ENCODE measurements at regions of chr1 and their contacts with region 1.

Region 1: GRCh38 chr1:23559136-23559984 is at the start of gene ID3:
- DNase-seq: peak; percentile 92 to 96 (median 95)
- H3K4me3 ChIP-seq: peak within 1 kb of the TSS; percentile 47 to 80 (median 61)
- H3K4me3 Mint-ChIP-seq: peak within 1 kb of the TSS; percentile 85 to 94
- H3K27ac ChIP-seq: peak within 1 kb of the TSS; percentile 80 to 82
- H3K27ac Mint-ChIP-seq: peak within 1 kb of the TSS; percentile 92 to 98 (median 97)
- H3K4me1 ChIP-seq: peaks cover 49 to 60% of the 10 kb centered on the region in 2 donors
- H3K4me1 Mint-ChIP-seq: peaks cover 66% of the 10 kb centered on the region
- H3K27me3 ChIP-seq: peaks cover 61 to 78% of the 10 kb centered on the region in 2 donors
- H3K27me3 Mint-ChIP-seq: peaks cover 77 to 89% (median 86%) of the 10 kb centered on the region in 3 donors
- CTCF ChIP-seq: no peak
- polyA plus RNA-seq, gene ID3: 1.1 to 31.1 (median 2.5) TPM

Region 2: GRCh38 chr1:23436520-23437354 is 122.6 kb before region 1 on chr1:
- intact Hi-C with region 1: no loop called
- DNase-seq: no peak
- H3K4me3 ChIP-seq: no peak overlapping the region
- H3K4me3 Mint-ChIP-seq: peak overlapping the region in 1 of 2 donors; percentile 26
- H3K27ac ChIP-seq: no peak overlapping the region
- H3K27ac Mint-ChIP-seq: no peak overlapping the region
- H3K4me1 ChIP-seq: no peaks in the 10 kb centered on the region
- H3K4me1 Mint-ChIP-seq: no peaks in the 10 kb centered on the region
- H3K27me3 ChIP-seq: peaks cover 0 to 2% of the 10 kb centered on the region in 2 donors
- H3K27me3 Mint-ChIP-seq: peaks cover 7 to 19% (median 17%) of the 10 kb centered on the region in 3 donors
- CTCF ChIP-seq: no peak

Region 3: GRCh38 chr1:23484253-23485001 is 74.9 kb before region 1 on chr1:
- intact Hi-C with region 1: no loop called
- DNase-seq: peak; percentile 71 to 88 (median 83)
- H3K4me3 ChIP-seq: peak overlapping the region; percentile 46 to 80 (median 46)
- H3K4me3 Mint-ChIP-seq: peak overlapping the region; percentile 89 to 95
- H3K27ac ChIP-seq: no peak overlapping the region
- H3K27ac Mint-ChIP-seq: peak overlapping the region in 6 of 7 donors; percentile 71 to 92 (median 88)
- H3K4me1 ChIP-seq: peaks cover 11 to 16% of the 10 kb centered on the region in 2 donors
- H3K4me1 Mint-ChIP-seq: peaks cover 14% of the 10 kb centered on the region
- H3K27me3 ChIP-seq: peaks cover 41 to 56% of the 10 kb centered on the region in 2 donors
- H3K27me3 Mint-ChIP-seq: peaks cover 62 to 72% (median 72%) of the 10 kb centered on the region in 3 donors
- CTCF ChIP-seq: no peak

Region 4: GRCh38 chr1:23591460-23592208 is 32.3 kb after region 1 on chr1:
- intact Hi-C with region 1: loop called in 1 of 2 experiments (anchors 5 kb)
- DNase-seq: no peak
- H3K4me3 ChIP-seq: no peak overlapping the region
- H3K4me3 Mint-ChIP-seq: no peak overlapping the region
- H3K27ac ChIP-seq: no peak overlapping the region
- H3K27ac Mint-ChIP-seq: peak overlapping the region in 2 of 7 donors; percentile 34 to 72
- H3K4me1 ChIP-seq: no peaks in the 10 kb centered on the region
- H3K4me1 Mint-ChIP-seq: peaks cover 16% of the 10 kb centered on the region
- H3K27me3 ChIP-seq: no peaks in the 10 kb centered on the region
- H3K27me3 Mint-ChIP-seq: peaks cover 8 to 24% (median 11%) of the 10 kb centered on the region in 3 donors
- CTCF ChIP-seq: no peak

Region 5: DNA sequence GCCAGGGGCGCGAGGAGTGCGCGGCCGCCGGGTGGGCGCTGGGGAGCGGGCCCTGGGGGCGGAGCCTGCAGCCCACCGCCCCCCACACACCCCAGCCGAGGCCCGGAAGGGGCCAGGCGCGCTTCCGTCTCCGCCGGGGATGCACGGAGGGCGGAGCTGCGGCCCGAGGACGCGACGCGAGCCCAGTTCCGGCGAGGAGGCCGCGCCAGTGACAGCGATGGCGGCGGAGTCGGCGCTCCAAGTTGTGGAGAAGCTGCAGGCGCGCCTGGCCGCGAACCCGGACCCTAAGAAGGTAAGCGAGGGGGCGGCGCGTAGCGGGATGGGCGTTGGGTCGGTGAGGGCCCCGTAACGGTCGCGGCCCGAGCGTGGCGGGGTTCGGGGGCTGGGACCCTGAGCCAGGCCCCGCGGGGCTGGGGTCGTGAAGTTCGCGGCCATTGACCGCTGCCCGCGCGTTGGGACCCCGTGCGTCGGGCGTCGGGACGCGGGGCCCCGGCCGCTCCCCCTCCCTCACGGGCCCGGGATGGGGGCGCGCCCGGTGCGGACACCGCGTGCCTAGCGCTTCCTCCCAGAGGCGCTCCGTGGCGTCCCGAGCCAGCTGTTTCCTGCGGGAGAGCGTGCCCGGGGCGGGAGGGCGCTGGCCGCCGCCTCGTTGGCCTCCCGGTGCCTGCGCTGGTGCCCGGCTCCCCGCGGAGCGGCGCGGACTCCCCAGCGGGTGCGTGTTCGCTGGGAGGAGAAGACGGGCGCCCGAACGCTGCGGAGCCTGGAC is 184.1 kb after region 1 on chr1 and contains the start of gene ELOA:
- intact Hi-C with region 1: loop called in 1 of 2 experiments (anchors 10 kb)
- DNase-seq: peak; percentile 53
- H3K4me3 ChIP-seq: peak within 1 kb of the TSS; percentile 67 to 93 (median 82)
- H3K4me3 Mint-ChIP-seq: peak within 1 kb of the TSS; percentile 93
- H3K27ac ChIP-seq: peak within 1 kb of the TSS; percentile 44 to 88
- H3K27ac Mint-ChIP-seq: peak within 1 kb of the TSS; percentile 80 to 91 (median 85)
- H3K4me1 ChIP-seq: peaks cover 16 to 27% of the 10 kb centered on the region in 2 donors
- H3K4me1 Mint-ChIP-seq: peaks cover 35% of the 10 kb centered on the region
- H3K27me3 ChIP-seq: no peaks in the 10 kb centered on the region
- H3K27me3 Mint-ChIP-seq: peaks cover 0 to 3% (median 2%) of the 10 kb centered on the region in 3 donors
- CTCF ChIP-seq: no peak
- polyA plus RNA-seq, gene ELOA: 25.4 to 31.2 (median 28.7) TPM

Region 6: GRCh38 chr1:23751050-23751814 is 191.9 kb after region 1 on chr1:
- intact Hi-C with region 1: loop called (anchors 10 kb)
- DNase-seq: peak in 2 of 3 donors; percentile 12 to 34
- H3K4me3 ChIP-seq: no peak overlapping the region
- H3K4me3 Mint-ChIP-seq: no peak overlapping the region
- H3K27ac ChIP-seq: peak overlapping the region in 1 of 2 donors; percentile 6
- H3K27ac Mint-ChIP-seq: peak overlapping the region in 4 of 7 donors; percentile 4 to 73 (median 60)
- H3K4me1 ChIP-seq: no peaks in the 10 kb centered on the region
- H3K4me1 Mint-ChIP-seq: peaks cover 13% of the 10 kb centered on the region
- H3K27me3 ChIP-seq: no peaks in the 10 kb centered on the region
- H3K27me3 Mint-ChIP-seq: peaks cover 0 to 2% (median 0%) of the 10 kb centered on the region in 3 donors
- CTCF ChIP-seq: peak; percentile 80